ENCODE measurements at regions of chr19 and their contacts with region 1.

Region 1: GRCh38 chr19:35869327-35870123 is 1.2 kb downstream of the APLP1 start:
- DNase-seq: peak; percentile 52 to 78 (median 66)
- ATAC-seq: peak in 3 of 4 donors; percentile 57 to 78 (median 70)
- H3K4me3 ChIP-seq: peak overlapping the region in 11 of 12 donors; percentile 13 to 67 (median 55)
- H3K27ac ChIP-seq: no peak overlapping the region
- H3K4me1 ChIP-seq: peaks cover 0 to 26% (median 18%) of the 10 kb centered on the region in 12 donors
- H3K27me3 ChIP-seq: peaks cover 0 to 22% (median 8%) of the 10 kb centered on the region in 9 donors
- CTCF ChIP-seq: no peak
- POLR2A ChIP-seq: no peak

Region 2: DNA sequence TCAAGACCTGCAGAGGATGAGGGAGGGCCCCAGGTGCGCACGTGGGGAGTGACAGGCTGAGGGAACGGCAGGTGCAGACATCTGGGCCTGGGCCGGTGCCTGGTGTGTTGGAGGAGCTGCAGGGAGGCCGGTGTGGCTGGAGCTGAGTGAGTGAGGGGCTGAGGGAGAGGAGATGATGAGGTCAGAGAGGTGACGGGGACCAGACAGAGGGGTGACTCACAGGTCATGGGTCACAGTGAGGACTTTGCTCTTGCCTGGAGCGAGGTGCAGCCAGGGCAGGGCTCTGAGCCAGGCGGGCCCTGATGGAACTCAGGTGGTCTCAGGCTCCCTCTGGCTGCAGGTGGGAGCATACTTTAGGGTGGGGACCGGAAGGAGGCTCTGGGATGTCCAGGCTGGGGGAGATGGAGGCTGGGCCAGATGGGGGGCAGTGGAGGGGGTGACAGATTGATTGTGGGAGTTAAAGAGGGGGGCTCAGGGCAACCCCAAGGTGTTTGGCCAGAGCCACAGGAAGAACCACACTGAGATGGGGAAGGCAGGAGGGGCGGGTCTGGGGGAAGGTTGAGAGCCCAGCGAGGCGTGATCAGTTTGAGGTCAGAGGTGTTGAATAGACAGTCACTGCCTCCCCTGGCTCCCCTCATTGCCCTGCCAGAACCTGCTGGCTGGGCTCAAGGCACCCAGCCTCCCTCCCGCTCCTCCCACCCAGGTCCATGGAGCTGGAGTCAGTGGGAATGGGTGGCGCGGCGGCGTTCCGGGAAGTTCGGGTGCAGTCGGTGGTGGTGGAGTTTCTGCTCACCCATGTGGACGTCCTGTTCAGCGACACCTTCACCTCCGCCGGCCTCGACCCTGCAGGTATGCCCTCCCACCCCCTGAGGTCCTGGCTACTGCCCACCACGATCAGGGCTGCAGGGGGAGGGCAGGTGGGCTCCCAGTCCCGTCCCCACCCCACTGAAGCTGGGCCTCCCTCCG is 85.8 kb before region 1 on chr19:
- intact Hi-C with region 1: loop called in 1 of 10 experiments (anchors 10 kb)
- DNase-seq: no peak
- ATAC-seq: no peak
- H3K4me3 ChIP-seq: no peak overlapping the region
- H3K27ac ChIP-seq: no peak overlapping the region
- H3K4me1 ChIP-seq: no peaks in the 10 kb centered on the region
- H3K27me3 ChIP-seq: no peaks in the 10 kb centered on the region
- CTCF ChIP-seq: no peak
- POLR2A ChIP-seq: no peak